Panc1 (cell line): ENCODE measurements at regions of chr2 and their contacts with region 1.

Region 1: DNA sequence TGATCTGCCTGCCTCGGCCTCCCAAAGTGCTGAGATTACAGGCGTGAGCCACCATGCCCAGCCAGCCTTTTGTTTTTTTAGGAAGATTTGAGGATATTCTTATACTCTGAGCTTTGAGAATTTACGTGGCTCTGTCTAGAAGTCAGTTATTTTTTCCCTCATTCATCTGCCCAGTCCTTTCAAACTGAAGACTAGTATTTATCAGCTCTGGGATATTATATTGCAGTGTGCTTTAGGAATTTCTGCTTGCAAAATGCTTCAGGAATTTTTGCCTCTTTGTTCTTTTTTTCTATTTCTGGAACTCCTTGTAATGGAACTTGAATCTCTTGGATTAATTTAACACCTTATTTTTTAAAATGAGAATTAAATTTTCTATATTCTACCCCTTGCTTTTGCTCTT is 22.6 kb downstream of the ACSL3 start:
- DNase-seq: no peak
- ATAC-seq: no peak
- H3K4me3 ChIP-seq: no peak overlapping the region
- H3K27ac ChIP-seq: no peak overlapping the region
- H3K4me1 ChIP-seq: peaks cover 26% of the 10 kb centered on the region
- H3K27me3 ChIP-seq: no peaks in the 10 kb centered on the region
- CTCF ChIP-seq: no peak

Region 2: GRCh38 chr2:222893716-222894115 is 10.3 kb after region 1 on chr2:
- CTCF ChIA-PET with region 1: no interaction called
- POLR2A ChIA-PET with region 1: interaction called, 10 read pairs
- in situ Hi-C with region 1: no loop called
- intact Hi-C with region 1: no loop called
- DNase-seq: no peak
- ATAC-seq: no peak
- H3K4me3 ChIP-seq: no peak overlapping the region
- H3K27ac ChIP-seq: no peak overlapping the region
- H3K4me1 ChIP-seq: peaks cover 5% of the 10 kb centered on the region; the same call in 1 of the 2 replicates
- H3K27me3 ChIP-seq: no peaks in the 10 kb centered on the region
- CTCF ChIP-seq: no peak

Region 3: GRCh38 chr2:222976521-222977076 is 93.2 kb after region 1 on chr2:
- CTCF ChIA-PET with region 1: no interaction called
- POLR2A ChIA-PET with region 1: no interaction called
- in situ Hi-C with region 1: no loop called
- intact Hi-C with region 1: no loop called
- DNase-seq: no peak
- ATAC-seq: no peak
- H3K4me3 ChIP-seq: no peak overlapping the region
- H3K27ac ChIP-seq: no peak overlapping the region
- H3K4me1 ChIP-seq: no peaks in the 10 kb centered on the region
- H3K27me3 ChIP-seq: no peaks in the 10 kb centered on the region
- CTCF ChIP-seq: no peak